ENCODE measurements at regions of chr20 and their contacts with region 1.

Region 1: GRCh38 chr20:6828794-6829423 is 61.4 kb downstream of the BMP2 start:
- DNase-seq: peak; percentile 43
- ATAC-seq: peak; percentile 85
- H3K4me3 ChIP-seq: no peak overlapping the region
- H3K27ac ChIP-seq: no peak overlapping the region
- H3K4me1 ChIP-seq: no peaks in the 10 kb centered on the region
- H3K27me3 ChIP-seq: no peaks in the 10 kb centered on the region
- CTCF ChIP-seq: peak; percentile 63
- POLR2A ChIP-seq: no peak
- RAD21 ChIP-seq: peak; percentile 46

Region 2: GRCh38 chr20:6142348-6142993 is 686.4 kb before region 1 on chr20:
- CTCF ChIA-PET with region 1: no interaction called
- POLR2A ChIA-PET with region 1: no interaction called
- dilution Hi-C with region 1: no loop called
- in situ Hi-C with region 1: no loop called
- intact Hi-C with region 1: loop called (anchors 5 kb)
- DNase-seq: peak; percentile 65
- ATAC-seq: peak; percentile 91
- H3K4me3 ChIP-seq: no peak overlapping the region
- H3K27ac ChIP-seq: no peak overlapping the region
- H3K4me1 ChIP-seq: no peaks in the 10 kb centered on the region
- H3K27me3 ChIP-seq: peaks cover 2% of the 10 kb centered on the region; the same call in 1 of the 2 replicates
- CTCF ChIP-seq: peak; percentile 84
- POLR2A ChIP-seq: no peak
- RAD21 ChIP-seq: peak; percentile 83

Region 3: DNA sequence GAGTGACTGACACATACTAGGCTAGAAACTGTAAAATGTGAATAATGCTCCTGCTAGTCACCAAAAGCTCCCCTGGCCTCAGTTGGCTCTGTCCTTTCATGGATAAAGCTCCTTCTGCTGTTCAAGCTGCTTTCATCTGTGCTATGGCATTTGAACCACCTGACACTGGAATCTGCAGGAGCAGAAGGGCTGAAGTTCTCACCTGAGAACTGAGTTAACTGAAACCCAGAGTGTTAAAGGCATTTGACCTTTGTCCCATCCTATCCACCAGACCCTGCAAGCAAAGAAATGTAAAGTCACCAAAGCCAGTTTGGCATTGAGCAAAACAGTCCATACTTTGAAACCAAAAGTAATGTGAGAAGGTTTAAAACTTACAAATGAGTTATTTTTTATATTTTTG is 16.2 kb after region 1 on chr20:
- CTCF ChIA-PET with region 1: no interaction called
- POLR2A ChIA-PET with region 1: no interaction called
- dilution Hi-C with region 1: no loop called
- in situ Hi-C with region 1: no loop called
- intact Hi-C with region 1: no loop called
- DNase-seq: no peak
- ATAC-seq: no peak
- H3K4me3 ChIP-seq: no peak overlapping the region
- H3K27ac ChIP-seq: no peak overlapping the region
- H3K4me1 ChIP-seq: no peaks in the 10 kb centered on the region
- H3K27me3 ChIP-seq: no peaks in the 10 kb centered on the region
- CTCF ChIP-seq: no peak
- POLR2A ChIP-seq: no peak
- RAD21 ChIP-seq: no peak

Region 4: GRCh38 chr20:6920991-6921613 is 92.2 kb after region 1 on chr20:
- CTCF ChIA-PET with region 1: no interaction called
- POLR2A ChIA-PET with region 1: no interaction called
- dilution Hi-C with region 1: no loop called
- in situ Hi-C with region 1: no loop called
- intact Hi-C with region 1: no loop called
- DNase-seq: no peak
- ATAC-seq: no peak
- H3K4me3 ChIP-seq: no peak overlapping the region
- H3K27ac ChIP-seq: no peak overlapping the region
- H3K4me1 ChIP-seq: no peaks in the 10 kb centered on the region
- H3K27me3 ChIP-seq: no peaks in the 10 kb centered on the region
- CTCF ChIP-seq: no peak
- POLR2A ChIP-seq: no peak
- RAD21 ChIP-seq: no peak